ENCODE measurements at regions of chr9 and their contacts with region 1.

Region 1: GRCh38 chr9:111456529-111456928 is 27.7 kb downstream of the ECPAS start:
- DNase-seq: no peak
- ATAC-seq: peak; percentile 17; the same call in 1 of the 2 replicates
- H3K4me3 ChIP-seq: no peak overlapping the region
- H3K27ac ChIP-seq: no peak overlapping the region
- H3K4me1 ChIP-seq: peaks cover 6% of the 10 kb centered on the region
- H3K27me3 ChIP-seq: no peaks in the 10 kb centered on the region
- CTCF ChIP-seq: no peak
- POLR2A ChIP-seq: no peak
- RAD21 ChIP-seq: no peak

Region 2: DNA sequence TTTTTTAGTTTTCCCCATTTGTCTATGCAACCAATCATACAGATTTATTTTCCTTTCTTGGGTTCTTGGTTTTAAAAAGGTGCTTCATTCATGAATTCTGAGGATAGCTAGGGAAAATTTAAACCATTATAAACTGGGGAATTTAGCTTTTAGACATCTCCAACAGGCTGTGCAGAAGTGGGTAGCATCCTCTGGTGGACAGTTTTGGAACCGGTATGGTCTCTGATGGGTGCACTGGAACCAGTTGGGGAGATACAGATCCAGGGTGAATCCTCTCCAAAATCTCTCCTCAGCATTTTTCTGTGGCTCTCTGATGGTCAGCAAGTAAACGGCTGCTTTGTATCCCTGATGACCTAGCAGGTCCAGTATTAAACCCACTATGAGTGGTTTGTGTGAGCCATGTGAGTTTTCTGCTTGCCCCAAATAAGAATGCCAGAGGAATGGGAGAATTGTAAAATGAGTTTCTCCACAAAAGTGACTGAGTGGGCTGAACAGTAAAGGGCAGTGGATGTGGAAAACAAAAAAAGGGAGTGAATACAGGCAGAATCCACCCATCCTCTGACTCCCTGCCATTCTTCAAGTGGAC is 165.5 kb after region 1 on chr9:
- CTCF ChIA-PET with region 1: interaction called, 5 read pairs
- POLR2A ChIA-PET with region 1: no interaction called
- dilution Hi-C with region 1: no loop called
- in situ Hi-C with region 1: no loop called
- intact Hi-C with region 1: loop called (anchors 10 kb)
- DNase-seq: peak; percentile 64
- ATAC-seq: peak; percentile 98
- H3K4me3 ChIP-seq: no peak overlapping the region
- H3K27ac ChIP-seq: no peak overlapping the region
- H3K4me1 ChIP-seq: peaks cover 2% of the 10 kb centered on the region; the same call in 1 of the 2 replicates
- H3K27me3 ChIP-seq: no peaks in the 10 kb centered on the region
- CTCF ChIP-seq: peak; percentile 85
- POLR2A ChIP-seq: no peak
- RAD21 ChIP-seq: peak; percentile 77

Measured in IMR-90 (cell line).